ENCODE measurements at regions of chr2 and their contacts with region 1.

Region 1: GRCh38 chr2:46803911-46804670 is 111.5 kb downstream of the MCFD2 start:
- DNase-seq: no peak
- H3K4me3 ChIP-seq: no peak overlapping the region
- H3K27ac ChIP-seq: peak overlapping the region; percentile 56
- H3K4me1 ChIP-seq: peaks cover 38% of the 10 kb centered on the region
- H3K27me3 ChIP-seq: no peaks in the 10 kb centered on the region
- CTCF ChIP-seq: no peak

Region 2: GRCh38 chr2:46876741-46877384 is 72.8 kb after region 1 on chr2:
- intact Hi-C with region 1: loop called (anchors 5 kb)
- DNase-seq: peak; percentile 47
- H3K4me3 ChIP-seq: no peak overlapping the region
- H3K27ac ChIP-seq: peak overlapping the region; percentile 71
- H3K4me1 ChIP-seq: peaks cover 62% of the 10 kb centered on the region
- H3K27me3 ChIP-seq: no peaks in the 10 kb centered on the region
- CTCF ChIP-seq: peak; percentile 76